ENCODE measurements at regions of chr15 and their contacts with region 1.

Region 1: GRCh38 chr15:90954712-90955671 is at the start of gene RCCD1:
- DNase-seq: peak; percentile 82 to 92 (median 84)
- H3K4me3 ChIP-seq: peak within 1 kb of the TSS; percentile 64
- H3K4me3 Mint-ChIP-seq: peak within 1 kb of the TSS; percentile 86 to 95 (median 88)
- H3K27ac ChIP-seq: peak within 1 kb of the TSS; percentile 89
- H3K27ac Mint-ChIP-seq: peak within 1 kb of the TSS; percentile 87 to 97 (median 92)
- H3K4me1 ChIP-seq: peaks cover 14% of the 10 kb centered on the region
- H3K4me1 Mint-ChIP-seq: peaks cover 5 to 27% (median 14%) of the 10 kb centered on the region in 3 donors
- H3K27me3 ChIP-seq: no peaks in the 10 kb centered on the region
- H3K27me3 Mint-ChIP-seq: no peaks in the 10 kb centered on the region
- total RNA-seq, gene RCCD1: 20.9 to 21.7 TPM

Region 2: GRCh38 chr15:90807074-90807785 is 147.8 kb before region 1 on chr15:
- CTCF ChIA-PET with region 1: no interaction called
- POLR2A ChIA-PET with region 1: no interaction called
- DNase-seq: no peak
- H3K4me3 ChIP-seq: no peak overlapping the region
- H3K4me3 Mint-ChIP-seq: no peak overlapping the region
- H3K27ac ChIP-seq: no peak overlapping the region
- H3K27ac Mint-ChIP-seq: peak overlapping the region in 5 of 8 donors; percentile 54 to 89 (median 75)
- H3K4me1 ChIP-seq: no peaks in the 10 kb centered on the region
- H3K4me1 Mint-ChIP-seq: peaks cover 4 to 17% (median 13%) of the 10 kb centered on the region in 3 donors
- H3K27me3 ChIP-seq: no peaks in the 10 kb centered on the region
- H3K27me3 Mint-ChIP-seq: no peaks in the 10 kb centered on the region

Region 3: GRCh38 chr15:90982135-90982534 is 27.1 kb after region 1 on chr15:
- CTCF ChIA-PET with region 1: interaction called, 16 read pairs
- POLR2A ChIA-PET with region 1: interaction called, 4 read pairs
- DNase-seq: no peak
- H3K4me3 ChIP-seq: no peak overlapping the region
- H3K4me3 Mint-ChIP-seq: no peak overlapping the region
- H3K27ac ChIP-seq: no peak overlapping the region
- H3K27ac Mint-ChIP-seq: no peak overlapping the region
- H3K4me1 ChIP-seq: no peaks in the 10 kb centered on the region
- H3K4me1 Mint-ChIP-seq: peaks cover 3 to 9% (median 4%) of the 10 kb centered on the region in 3 donors
- H3K27me3 ChIP-seq: no peaks in the 10 kb centered on the region
- H3K27me3 Mint-ChIP-seq: no peaks in the 10 kb centered on the region

Region 4: GRCh38 chr15:91022075-91022835 is 67.3 kb after region 1 on chr15 and contains the start of gene VPS33B:
- CTCF ChIA-PET with region 1: interaction called, 7 read pairs
- POLR2A ChIA-PET with region 1: interaction called, 10 read pairs
- DNase-seq: peak; percentile 71 to 86 (median 78)
- H3K4me3 ChIP-seq: peak within 1 kb of the TSS; percentile 79
- H3K4me3 Mint-ChIP-seq: peak within 1 kb of the TSS; percentile 90 to 98 (median 95)
- H3K27ac ChIP-seq: peak within 1 kb of the TSS; percentile 85
- H3K27ac Mint-ChIP-seq: peak within 1 kb of the TSS; percentile 80 to 98 (median 92)
- H3K4me1 ChIP-seq: peaks cover 16% of the 10 kb centered on the region
- H3K4me1 Mint-ChIP-seq: peaks cover 41 to 54% (median 49%) of the 10 kb centered on the region in 3 donors
- H3K27me3 ChIP-seq: no peaks in the 10 kb centered on the region
- H3K27me3 Mint-ChIP-seq: no peaks in the 10 kb centered on the region
- total RNA-seq, gene VPS33B: 20.4 to 20.6 TPM

Region 5: GRCh38 chr15:91032919-91033803 is 78.2 kb after region 1 on chr15:
- CTCF ChIA-PET with region 1: interaction called, 21 read pairs
- POLR2A ChIA-PET with region 1: no interaction called
- DNase-seq: peak; percentile 25 to 69 (median 38)
- H3K4me3 ChIP-seq: no peak overlapping the region
- H3K4me3 Mint-ChIP-seq: peak overlapping the region in 1 of 7 donors; percentile 27
- H3K27ac ChIP-seq: no peak overlapping the region
- H3K27ac Mint-ChIP-seq: peak overlapping the region in 2 of 8 donors; percentile 3 to 42
- H3K4me1 ChIP-seq: no peaks in the 10 kb centered on the region
- H3K4me1 Mint-ChIP-seq: peaks cover 0 to 8% (median 7%) of the 10 kb centered on the region in 3 donors
- H3K27me3 ChIP-seq: no peaks in the 10 kb centered on the region
- H3K27me3 Mint-ChIP-seq: peaks cover 0 to 3% of the 10 kb centered on the region in 2 donors

Region 6: DNA sequence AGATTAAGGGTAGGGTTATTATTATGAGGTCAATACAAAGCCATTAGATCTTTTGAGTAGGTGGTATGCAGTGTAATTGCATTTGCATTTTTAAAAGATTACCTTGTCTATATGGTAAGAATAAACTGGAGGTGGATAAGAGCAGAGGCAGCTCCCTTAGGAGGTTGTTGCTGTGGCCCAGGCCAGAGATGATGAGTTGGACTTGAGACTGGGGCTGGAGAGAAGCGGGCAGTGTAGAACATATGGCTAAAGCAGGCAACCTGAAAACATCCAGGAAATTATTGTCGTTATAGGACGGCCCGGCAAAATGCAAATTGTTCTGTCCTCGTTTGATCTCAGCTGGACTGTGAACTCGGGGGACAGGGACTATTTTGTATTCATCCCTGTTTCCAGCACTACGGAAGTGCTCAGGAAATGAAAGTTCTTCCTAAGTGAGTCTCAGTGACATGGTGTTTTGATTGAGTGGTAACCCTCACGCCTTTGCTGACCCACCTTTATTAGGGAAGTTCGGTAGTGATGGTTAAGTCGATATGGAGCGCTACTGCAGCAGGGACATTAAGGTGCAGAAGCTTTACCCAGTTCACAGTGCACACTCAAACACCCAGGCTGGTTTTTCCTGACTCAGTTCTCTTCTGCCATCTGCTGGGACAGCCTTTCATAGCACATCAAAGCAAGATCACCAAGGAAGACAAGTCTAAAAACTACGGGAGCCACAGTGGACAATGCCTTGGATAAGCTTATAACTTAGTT is 94.6 kb after region 1 on chr15:
- CTCF ChIA-PET with region 1: interaction called, 20 read pairs
- POLR2A ChIA-PET with region 1: no interaction called
- DNase-seq: peak; percentile 12 to 67 (median 40)
- H3K4me3 ChIP-seq: no peak overlapping the region
- H3K4me3 Mint-ChIP-seq: peak overlapping the region in 2 of 7 donors; percentile 5 to 37
- H3K27ac ChIP-seq: no peak overlapping the region
- H3K27ac Mint-ChIP-seq: peak overlapping the region in 2 of 8 donors; percentile 6 to 86
- H3K4me1 ChIP-seq: peaks cover 18% of the 10 kb centered on the region
- H3K4me1 Mint-ChIP-seq: peaks cover 25 to 29% (median 28%) of the 10 kb centered on the region in 3 donors
- H3K27me3 ChIP-seq: peaks cover under 1% of the 10 kb centered on the region
- H3K27me3 Mint-ChIP-seq: peaks cover 9 to 24% of the 10 kb centered on the region in 2 donors

Measured in CD8-positive, alpha-beta memory T cell (primary cell).